ENCODE measurements at regions of chr4 and their contacts with region 1.

Region 1: DNA sequence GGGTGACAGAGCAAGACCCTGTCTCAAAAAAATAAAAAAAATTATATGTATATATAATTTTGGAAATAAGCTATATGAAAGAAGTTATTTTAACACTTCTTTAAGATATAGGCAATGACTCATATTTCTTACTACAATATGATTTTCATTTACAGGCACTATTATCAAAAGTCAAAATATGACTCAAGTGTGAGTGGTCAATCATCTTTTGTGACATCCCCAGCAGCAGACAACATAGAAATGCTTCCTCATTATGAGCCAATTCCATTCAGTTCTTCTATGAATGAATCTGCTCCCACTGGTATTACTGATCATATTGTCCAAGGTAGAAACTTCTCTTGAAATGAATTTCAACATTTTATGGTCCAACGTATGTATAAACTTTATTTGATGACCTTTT is 20.8 kb downstream of the OCIAD1 start:
- DNase-seq: no peak
- ATAC-seq: no peak
- H3K4me3 ChIP-seq: no peak overlapping the region
- H3K27ac ChIP-seq: no peak overlapping the region
- H3K4me1 ChIP-seq: peaks cover 0 to 17% of the 10 kb centered on the region in 2 experiments; a peak in 4 of 5 replicates
- H3K27me3 ChIP-seq: no peaks in the 10 kb centered on the region
- CTCF ChIP-seq: no peak
- EP300 ChIP-seq: no peak
- POLR2A ChIP-seq: no peak
- RAD21 ChIP-seq: no peak

Region 2: GRCh38 chr4:48779998-48780742 is 71.5 kb before region 1 on chr4 and contains the start of gene FRYL:
- CTCF ChIA-PET with region 1: no interaction called
- POLR2A ChIA-PET with region 1: no interaction called
- in situ Hi-C with region 1: no loop called
- intact Hi-C with region 1: no loop called
- DNase-seq: peak; percentile 97 to 99 (median 98)
- ATAC-seq: peak; percentile 90
- H3K4me3 ChIP-seq: peak within 1 kb of the TSS; percentile 88
- H3K27ac ChIP-seq: peak within 1 kb of the TSS; percentile 88
- H3K4me1 ChIP-seq: peaks cover 9 to 20% of the 10 kb centered on the region in 2 experiments
- H3K27me3 ChIP-seq: no peaks in the 10 kb centered on the region
- CTCF ChIP-seq: no peak
- EP300 ChIP-seq: no peak
- POLR2A ChIP-seq: peak; percentile 82
- RAD21 ChIP-seq: no peak
- polyA plus RNA-seq, gene FRYL: 7.2 TPM

Region 3: GRCh38 chr4:48836658-48837057 is 15.0 kb before region 1 on chr4:
- CTCF ChIA-PET with region 1: no interaction called
- POLR2A ChIA-PET with region 1: interaction called, 18 read pairs
- in situ Hi-C with region 1: no loop called
- intact Hi-C with region 1: no loop called
- DNase-seq: no peak
- ATAC-seq: no peak
- H3K4me3 ChIP-seq: no peak overlapping the region
- H3K27ac ChIP-seq: no peak overlapping the region
- H3K4me1 ChIP-seq: no peaks in the 10 kb centered on the region
- H3K27me3 ChIP-seq: no peaks in the 10 kb centered on the region
- CTCF ChIP-seq: no peak
- EP300 ChIP-seq: no peak
- POLR2A ChIP-seq: no peak
- RAD21 ChIP-seq: no peak